Activated CD8-positive, alpha-beta T cell treated with anti-CD3 and anti-CD28 coated beads for 36 hours (primary cell): ENCODE measurements at regions of chr11 and their contacts with region 1.

Region 1: DNA sequence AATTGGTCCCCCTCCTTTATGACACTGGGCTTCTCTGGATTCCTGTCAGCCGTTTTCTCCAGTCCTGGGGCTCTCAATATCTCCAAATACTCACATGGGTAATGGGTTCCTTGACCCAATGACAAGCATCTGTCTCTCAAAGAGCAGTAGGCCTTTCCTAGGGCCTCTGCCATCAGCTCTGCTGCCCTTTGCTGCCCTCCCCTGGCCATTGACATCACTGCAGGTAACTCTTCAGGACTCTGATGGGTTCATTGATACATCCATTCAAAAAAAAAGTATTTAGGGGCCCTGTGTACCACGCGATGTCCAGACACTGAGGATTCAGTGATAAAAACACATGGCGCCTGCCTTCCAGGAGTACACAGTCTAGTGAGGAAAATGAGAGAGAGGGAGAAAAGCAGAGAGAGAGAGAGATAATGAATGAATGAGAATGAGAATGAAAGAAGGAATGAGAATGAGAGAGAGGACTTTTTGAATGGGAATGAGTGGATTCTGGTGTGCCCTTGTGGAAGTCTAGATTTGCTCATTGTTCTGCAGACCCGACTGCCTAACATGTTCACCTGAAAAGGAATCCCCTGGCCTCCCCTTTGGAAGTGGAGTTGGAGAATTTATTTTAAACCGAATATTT is 42.6 kb upstream of the OLFML1 start:
- DNase-seq: peak; percentile 87
- ATAC-seq: peak; percentile 97
- H3K4me3 Mint-ChIP-seq: no peak overlapping the region
- H3K27ac Mint-ChIP-seq: no peak overlapping the region
- H3K4me1 Mint-ChIP-seq: no peaks in the 10 kb centered on the region
- H3K27me3 Mint-ChIP-seq: no peaks in the 10 kb centered on the region
- CTCF ChIP-seq: peak; percentile 82

Region 2: DNA sequence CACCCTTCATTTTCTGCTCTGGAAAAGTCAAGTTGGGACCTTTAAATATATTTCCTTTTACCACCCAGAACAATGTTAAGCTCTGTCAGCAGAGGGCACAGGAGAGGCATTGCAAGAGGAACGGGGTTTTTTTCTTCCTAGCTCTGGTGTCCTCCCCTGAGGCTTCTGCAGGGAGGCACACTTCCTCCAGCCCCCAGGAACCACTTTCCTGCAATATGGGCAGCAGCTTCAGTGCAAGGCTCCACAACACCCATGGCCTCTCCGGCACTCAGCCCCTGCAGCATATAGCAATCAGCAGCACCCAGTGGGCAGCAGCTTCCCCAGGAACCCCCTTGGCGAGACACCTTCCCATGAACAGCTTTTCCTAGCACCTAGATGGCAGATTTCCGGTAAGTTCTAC is 89.6 kb before region 1 on chr11:
- CTCF ChIA-PET with region 1: interaction called, 17 read pairs
- POLR2A ChIA-PET with region 1: no interaction called
- intact Hi-C with region 1: loop called (anchors 10 kb)
- DNase-seq: peak; percentile 33
- ATAC-seq: no peak
- H3K4me3 Mint-ChIP-seq: no peak overlapping the region
- H3K27ac Mint-ChIP-seq: no peak overlapping the region
- H3K4me1 Mint-ChIP-seq: no peaks in the 10 kb centered on the region
- H3K27me3 Mint-ChIP-seq: peaks cover 4% of the 10 kb centered on the region
- CTCF ChIP-seq: peak; percentile 21

Region 3: GRCh38 chr11:7428196-7428595 is 14.5 kb before region 1 on chr11:
- CTCF ChIA-PET with region 1: interaction called, 11 read pairs
- POLR2A ChIA-PET with region 1: no interaction called
- intact Hi-C with region 1: no loop called
- DNase-seq: no peak
- ATAC-seq: no peak
- H3K4me3 Mint-ChIP-seq: no peak overlapping the region
- H3K27ac Mint-ChIP-seq: no peak overlapping the region
- H3K4me1 Mint-ChIP-seq: peaks cover 1% of the 10 kb centered on the region
- H3K27me3 Mint-ChIP-seq: no peaks in the 10 kb centered on the region
- CTCF ChIP-seq: no peak